ENCODE measurements at regions of chr18 and their contacts with region 1.

Region 1: DNA sequence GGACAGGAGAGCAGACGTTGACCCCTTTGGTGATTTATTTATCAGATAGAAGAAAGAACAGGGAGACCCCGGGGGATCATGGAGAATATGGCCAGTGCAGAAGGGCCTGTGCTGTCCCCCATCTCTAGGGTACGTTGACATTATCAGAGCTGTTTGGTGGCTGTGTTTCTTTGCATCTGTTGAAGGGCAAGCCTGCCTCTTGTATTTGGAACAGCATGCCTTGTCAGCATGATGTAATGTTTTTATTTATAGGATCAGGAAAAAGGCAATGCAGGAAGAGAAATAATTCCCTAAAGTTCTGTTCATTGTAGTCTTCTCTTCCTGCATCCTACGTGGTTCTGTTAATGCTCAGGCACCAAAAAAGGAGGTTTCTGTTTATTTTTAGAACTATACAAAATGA is 49.8 kb upstream of the CABYR start:
- DNase-seq: no peak
- CTCF ChIP-seq: no peak

Region 2: DNA sequence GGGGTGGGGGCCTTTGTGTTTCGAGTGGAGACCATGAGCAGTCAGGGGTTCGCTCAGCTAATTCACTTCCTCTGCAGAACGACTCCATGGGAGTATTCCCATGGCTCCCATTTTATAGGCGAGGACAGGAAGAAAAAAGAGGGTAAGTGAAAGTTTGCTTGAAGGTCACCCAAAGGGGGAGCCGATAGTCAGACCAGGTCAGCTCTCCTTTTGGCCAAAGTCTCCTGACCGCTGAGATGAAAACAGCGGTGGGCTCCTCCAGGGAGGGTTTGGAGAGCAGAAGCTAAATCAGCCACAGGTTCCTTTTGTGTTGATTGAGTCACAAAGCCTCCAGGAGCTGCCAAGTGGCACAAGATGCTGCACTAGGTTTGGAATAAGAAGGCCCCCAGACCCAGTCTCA is 1637.3 kb before region 1 on chr18:
- in situ Hi-C with region 1: no loop called
- DNase-seq: no peak
- CTCF ChIP-seq: no peak

Region 3: GRCh38 chr18:24176727-24177416 is 87.8 kb after region 1 on chr18:
- in situ Hi-C with region 1: loop called (anchors 25 kb)
- DNase-seq: peak; percentile 72
- CTCF ChIP-seq: peak; percentile 62

Region 4: DNA sequence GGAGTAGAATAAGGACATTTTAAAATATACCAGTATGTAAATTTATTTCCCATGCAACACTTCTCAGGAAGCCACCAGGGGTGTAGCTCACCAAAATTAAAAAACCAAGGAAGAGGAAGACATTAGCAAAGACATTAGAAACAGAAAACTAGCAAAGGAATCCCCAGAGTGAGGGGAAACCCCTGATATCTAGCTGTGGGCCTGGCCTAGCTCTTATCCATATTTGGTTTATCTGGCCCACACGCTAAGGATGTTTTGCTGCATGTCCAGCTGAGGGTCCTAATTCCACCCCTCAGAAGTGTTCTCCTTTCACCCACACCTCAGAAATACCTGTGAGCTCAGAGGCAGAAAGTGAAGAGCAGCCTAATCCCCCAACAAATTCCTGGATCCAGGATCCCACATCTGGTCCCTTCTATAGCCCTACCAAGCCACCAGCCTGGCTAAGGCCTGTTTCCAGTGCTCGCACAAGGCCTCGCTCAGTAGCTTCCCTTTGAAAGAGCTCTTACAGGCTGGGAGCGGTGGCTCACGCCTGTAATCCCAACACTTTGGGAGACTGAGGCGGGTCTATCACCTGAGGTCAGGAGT is 291.2 kb after region 1 on chr18:
- in situ Hi-C with region 1: no loop called
- DNase-seq: no peak
- CTCF ChIP-seq: no peak